MCF 10A (cell line): ENCODE measurements at regions of chr2 and their contacts with region 1.

Region 1: DNA sequence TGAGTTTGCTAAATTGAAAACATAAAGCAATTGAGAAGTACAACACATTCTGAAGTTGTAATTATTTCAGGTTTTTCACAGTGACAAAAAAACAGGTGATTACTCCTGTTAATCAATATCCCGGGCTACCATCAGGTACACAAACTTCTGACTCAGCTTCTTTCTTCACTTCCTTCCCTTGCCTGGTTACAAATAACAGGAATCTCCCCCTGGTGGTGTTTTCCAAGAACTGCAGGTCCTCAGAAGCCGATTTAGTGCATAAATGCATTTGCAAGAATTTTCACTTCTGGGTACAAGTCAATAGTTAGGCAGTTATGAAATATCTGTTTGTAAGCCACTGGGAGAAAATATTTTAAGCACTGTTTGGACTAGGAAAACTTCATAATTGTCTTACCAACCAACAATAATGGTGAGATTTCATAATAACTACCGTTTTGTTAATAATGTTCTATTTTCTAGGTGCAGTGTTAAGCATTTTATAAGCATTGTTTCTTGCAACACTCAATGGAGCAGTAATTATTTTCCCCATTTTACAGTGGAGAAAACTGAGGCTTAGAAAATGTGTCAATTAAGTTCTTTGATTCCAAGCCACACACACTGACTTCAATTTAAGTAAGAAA is 12.4 kb upstream of the GMCL1 start:
- DNase-seq: peak; percentile 86
- H3K4me3 Mint-ChIP-seq: no peak overlapping the region
- H3K27ac Mint-ChIP-seq: no peak overlapping the region
- H3K4me1 Mint-ChIP-seq: no peaks in the 10 kb centered on the region
- H3K27me3 Mint-ChIP-seq: no peaks in the 10 kb centered on the region
- CTCF ChIP-seq: peak; percentile 79

Region 2: GRCh38 chr2:69559442-69560146 is 257.4 kb before region 1 on chr2:
- CTCF ChIA-PET with region 1: interaction called, 3 read pairs
- POLR2A ChIA-PET with region 1: no interaction called
- intact Hi-C with region 1: loop called (anchors 2 kb)
- DNase-seq: peak; percentile 71
- H3K4me3 Mint-ChIP-seq: no peak overlapping the region
- H3K27ac Mint-ChIP-seq: no peak overlapping the region
- H3K4me1 Mint-ChIP-seq: peaks cover 6% of the 10 kb centered on the region
- H3K27me3 Mint-ChIP-seq: no peaks in the 10 kb centered on the region
- CTCF ChIP-seq: peak; percentile 64

Region 3: DNA sequence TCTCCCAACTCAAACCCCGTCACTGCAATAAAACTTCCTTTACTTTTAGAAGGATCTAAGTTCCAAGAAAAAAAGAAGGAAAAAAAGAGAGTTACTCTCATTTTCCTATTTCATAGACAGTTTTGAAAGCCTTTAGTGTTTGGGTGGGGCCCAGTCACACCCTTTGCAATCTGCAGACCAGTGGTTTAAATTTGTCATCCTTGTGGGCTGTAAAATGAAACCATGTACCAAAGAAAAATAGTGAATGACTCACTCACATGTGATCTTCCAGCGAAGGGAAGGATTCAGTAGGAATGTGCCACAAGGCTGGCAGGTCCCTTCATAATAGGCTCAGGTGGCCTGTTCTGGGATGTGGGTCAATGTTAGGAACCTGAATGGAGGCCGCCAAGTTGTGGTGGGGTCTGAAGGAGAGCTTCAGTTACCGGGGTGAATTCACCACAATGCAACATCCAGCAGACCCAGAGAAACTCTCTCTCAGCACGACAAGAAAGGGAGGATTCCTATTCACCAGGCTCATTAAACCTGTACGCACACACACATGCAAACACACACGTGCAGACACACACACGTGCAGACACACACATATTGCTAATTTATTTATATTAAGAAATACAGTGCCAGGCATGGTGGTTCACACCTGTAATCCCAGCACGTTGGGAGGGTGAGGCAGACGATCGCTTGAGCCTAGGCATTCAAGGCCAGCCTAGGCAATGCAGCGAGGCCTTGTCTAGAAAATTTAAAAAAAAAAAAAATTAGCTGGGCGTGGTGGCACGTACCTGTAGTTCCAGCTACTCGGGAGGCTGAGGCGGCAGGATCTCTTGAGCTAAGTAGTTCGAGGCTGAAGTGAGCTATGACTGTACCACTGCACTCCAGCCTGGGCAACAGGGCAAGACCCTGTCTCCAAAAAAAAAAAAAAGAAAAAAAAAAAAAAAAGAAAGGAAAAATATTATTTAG is 46.6 kb before region 1 on chr2:
- CTCF ChIA-PET with region 1: interaction called, 5 read pairs
- POLR2A ChIA-PET with region 1: interaction called, 4 read pairs
- intact Hi-C with region 1: loop called (anchors 5 kb)
- DNase-seq: peak; percentile 87
- H3K4me3 Mint-ChIP-seq: peak overlapping the region; percentile 57
- H3K27ac Mint-ChIP-seq: peak overlapping the region; percentile 92
- H3K4me1 Mint-ChIP-seq: peaks cover 37% of the 10 kb centered on the region
- H3K27me3 Mint-ChIP-seq: no peaks in the 10 kb centered on the region
- CTCF ChIP-seq: no peak

Region 4: GRCh38 chr2:69798909-69799526 is 18.0 kb before region 1 on chr2:
- CTCF ChIA-PET with region 1: interaction called, 20 read pairs
- POLR2A ChIA-PET with region 1: interaction called, 6 read pairs
- intact Hi-C with region 1: no loop called
- DNase-seq: no peak
- H3K4me3 Mint-ChIP-seq: peak overlapping the region; percentile 71
- H3K27ac Mint-ChIP-seq: peak overlapping the region; percentile 88
- H3K4me1 Mint-ChIP-seq: peaks cover 28% of the 10 kb centered on the region
- H3K27me3 Mint-ChIP-seq: no peaks in the 10 kb centered on the region
- CTCF ChIP-seq: no peak